ENCODE measurements at regions of chr6 and their contacts with region 1.

Region 1: GRCh38 chr6:35240840-35241801 is 18.4 kb upstream of the ZNF76 start:
- DNase-seq: peak; percentile 49 to 78 (median 54)
- H3K4me3 ChIP-seq: no peak overlapping the region
- H3K4me3 Mint-ChIP-seq: no peak overlapping the region
- H3K27ac ChIP-seq: no peak overlapping the region
- H3K27ac Mint-ChIP-seq: peak overlapping the region in 2 of 8 donors; percentile 78 to 90
- H3K4me1 ChIP-seq: no peaks in the 10 kb centered on the region
- H3K4me1 Mint-ChIP-seq: peaks cover 3 to 5% (median 3%) of the 10 kb centered on the region in 3 donors
- H3K27me3 ChIP-seq: no peaks in the 10 kb centered on the region
- H3K27me3 Mint-ChIP-seq: peaks cover 0 to 2% of the 10 kb centered on the region in 2 donors

Region 2: DNA sequence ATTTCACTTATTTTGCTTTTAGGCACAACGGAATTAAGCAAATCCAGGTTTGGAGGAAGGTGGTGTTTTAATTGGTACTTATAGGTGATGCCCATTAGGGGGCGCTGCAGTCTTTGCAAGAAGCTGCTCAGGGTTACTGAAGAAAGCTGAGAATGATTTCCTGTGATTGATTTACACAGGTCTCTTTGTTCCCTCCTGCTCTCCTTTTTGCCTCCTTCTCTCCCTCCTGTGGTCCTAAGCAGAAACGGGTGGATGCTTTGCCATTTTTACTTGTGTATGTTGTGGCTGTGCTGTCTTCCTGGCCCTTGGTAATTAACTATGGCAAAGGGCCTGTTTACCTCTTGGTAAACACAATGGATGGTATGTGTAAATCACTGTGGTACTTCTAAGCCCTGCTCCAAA is 254.3 kb before region 1 on chr6:
- CTCF ChIA-PET with region 1: interaction called, 14 read pairs
- POLR2A ChIA-PET with region 1: no interaction called
- DNase-seq: peak; percentile 37 to 62 (median 49)
- H3K4me3 ChIP-seq: no peak overlapping the region
- H3K4me3 Mint-ChIP-seq: no peak overlapping the region
- H3K27ac ChIP-seq: no peak overlapping the region
- H3K27ac Mint-ChIP-seq: peak overlapping the region in 1 of 8 donors; percentile 35
- H3K4me1 ChIP-seq: no peaks in the 10 kb centered on the region
- H3K4me1 Mint-ChIP-seq: no peaks in the 10 kb centered on the region
- H3K27me3 ChIP-seq: no peaks in the 10 kb centered on the region
- H3K27me3 Mint-ChIP-seq: no peaks in the 10 kb centered on the region

Region 3: DNA sequence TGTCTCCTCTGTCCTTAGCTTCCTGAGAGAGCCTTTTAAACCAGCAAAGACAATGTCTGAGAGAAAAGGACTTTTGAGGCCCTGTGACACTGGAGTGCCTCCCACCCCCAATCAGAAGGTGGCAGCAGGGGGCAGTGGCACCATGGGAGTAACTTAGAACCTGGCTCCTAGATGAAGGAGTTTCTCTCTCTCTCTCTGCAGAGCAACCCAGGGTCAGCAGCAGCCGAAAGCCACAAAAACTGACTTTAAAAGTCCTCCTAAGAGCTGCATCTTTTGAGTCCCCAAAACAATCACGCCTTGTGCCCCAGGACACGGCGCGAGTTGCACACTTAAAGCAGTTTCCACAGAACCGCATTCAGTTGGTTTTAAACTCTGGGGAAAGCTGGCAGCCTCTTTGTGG is 94.7 kb before region 1 on chr6:
- CTCF ChIA-PET with region 1: interaction called, 19 read pairs
- POLR2A ChIA-PET with region 1: no interaction called
- DNase-seq: peak in 2 of 5 donors; percentile 10 to 54
- H3K4me3 ChIP-seq: no peak overlapping the region
- H3K4me3 Mint-ChIP-seq: no peak overlapping the region
- H3K27ac ChIP-seq: no peak overlapping the region
- H3K27ac Mint-ChIP-seq: no peak overlapping the region
- H3K4me1 ChIP-seq: no peaks in the 10 kb centered on the region
- H3K4me1 Mint-ChIP-seq: peaks cover 0 to 3% (median 2%) of the 10 kb centered on the region in 3 donors
- H3K27me3 ChIP-seq: no peaks in the 10 kb centered on the region
- H3K27me3 Mint-ChIP-seq: peaks cover 7 to 18% of the 10 kb centered on the region in 2 donors

Region 4: GRCh38 chr6:35206346-35206745 is 34.8 kb before region 1 on chr6:
- CTCF ChIA-PET with region 1: interaction called, 26 read pairs
- POLR2A ChIA-PET with region 1: no interaction called
- DNase-seq: no peak
- H3K4me3 ChIP-seq: no peak overlapping the region
- H3K4me3 Mint-ChIP-seq: no peak overlapping the region
- H3K27ac ChIP-seq: no peak overlapping the region
- H3K27ac Mint-ChIP-seq: peak overlapping the region in 1 of 8 donors; percentile 7
- H3K4me1 ChIP-seq: no peaks in the 10 kb centered on the region
- H3K4me1 Mint-ChIP-seq: no peaks in the 10 kb centered on the region
- H3K27me3 ChIP-seq: peaks cover 9% of the 10 kb centered on the region
- H3K27me3 Mint-ChIP-seq: peaks cover 31 to 80% of the 10 kb centered on the region in 2 donors

Region 5: DNA sequence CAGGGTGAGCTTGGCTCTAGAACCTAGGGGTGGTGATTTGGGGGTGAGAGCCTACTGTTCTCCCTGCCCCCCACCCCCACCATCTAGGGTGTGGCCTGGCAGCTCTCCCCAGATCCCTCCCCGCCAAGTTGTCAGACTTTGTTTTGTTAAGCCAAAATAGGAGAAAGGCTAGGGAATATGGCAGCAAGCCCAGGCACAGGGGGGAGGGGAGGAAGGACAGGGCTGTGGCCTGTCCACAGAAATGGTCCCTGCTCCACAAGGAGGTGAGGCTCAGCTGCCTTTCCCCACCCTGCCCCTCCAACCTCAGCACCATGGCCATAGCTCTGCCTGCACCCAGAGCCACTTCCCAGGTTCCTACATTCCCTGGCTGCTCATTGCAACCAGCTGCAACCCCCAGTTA is 10.2 kb before region 1 on chr6:
- CTCF ChIA-PET with region 1: interaction called, 26 read pairs
- POLR2A ChIA-PET with region 1: no interaction called
- DNase-seq: no peak
- H3K4me3 ChIP-seq: no peak overlapping the region
- H3K4me3 Mint-ChIP-seq: no peak overlapping the region
- H3K27ac ChIP-seq: no peak overlapping the region
- H3K27ac Mint-ChIP-seq: no peak overlapping the region
- H3K4me1 ChIP-seq: no peaks in the 10 kb centered on the region
- H3K4me1 Mint-ChIP-seq: peaks cover 0 to 1% (median 0%) of the 10 kb centered on the region in 3 donors
- H3K27me3 ChIP-seq: no peaks in the 10 kb centered on the region
- H3K27me3 Mint-ChIP-seq: peaks cover 0 to 2% of the 10 kb centered on the region in 2 donors

Region 6: DNA sequence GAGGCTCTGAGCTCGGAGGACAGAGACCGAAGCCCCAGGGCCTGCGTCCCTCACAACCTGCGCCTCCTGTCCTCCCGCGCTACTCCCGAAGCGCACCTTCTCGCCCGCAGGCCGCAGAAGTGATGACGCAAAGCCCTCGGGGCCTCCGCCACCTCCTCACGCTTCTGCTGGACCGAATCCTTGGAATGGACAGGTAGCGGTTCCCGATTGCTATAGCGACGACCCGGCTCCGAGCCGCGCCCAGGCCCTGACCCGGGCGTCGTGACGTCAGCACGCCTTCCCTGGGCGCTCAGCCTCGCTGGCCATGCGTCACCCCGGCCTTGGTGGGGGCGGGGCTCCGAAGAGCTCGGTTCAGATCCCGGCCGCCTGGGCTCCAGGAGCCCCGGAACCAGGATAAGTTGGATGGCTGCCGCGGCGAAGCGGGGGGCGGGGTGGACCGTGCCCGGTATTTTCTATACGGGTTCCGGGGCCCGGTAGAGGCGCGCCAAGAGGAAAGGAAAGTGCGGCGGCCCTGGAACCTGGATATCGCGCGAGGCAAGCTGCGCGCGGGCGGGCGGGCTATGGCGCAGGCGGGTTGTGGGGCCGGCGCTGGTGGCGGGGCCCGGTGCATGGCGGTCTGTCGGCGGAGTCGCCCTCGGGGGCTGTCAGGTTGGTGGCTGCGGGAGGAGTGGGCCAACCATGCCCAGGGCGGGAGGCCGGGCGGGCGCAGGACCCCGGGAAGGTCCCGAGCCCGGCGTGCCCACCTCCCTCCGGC is 18.2 kb after region 1 on chr6 and contains the start of gene ZNF76:
- CTCF ChIA-PET with region 1: interaction called, 13 read pairs
- POLR2A ChIA-PET with region 1: no interaction called
- DNase-seq: peak; percentile 92 to 94 (median 93)
- H3K4me3 ChIP-seq: peak within 1 kb of the TSS; percentile 97
- H3K4me3 Mint-ChIP-seq: peak within 1 kb of the TSS; percentile 89 to 99 (median 96)
- H3K27ac ChIP-seq: peak within 1 kb of the TSS; percentile 94
- H3K27ac Mint-ChIP-seq: peak within 1 kb of the TSS; percentile 93 to 99 (median 99)
- H3K4me1 ChIP-seq: peaks cover 44% of the 10 kb centered on the region
- H3K4me1 Mint-ChIP-seq: peaks cover 49 to 62% (median 61%) of the 10 kb centered on the region in 3 donors
- H3K27me3 ChIP-seq: no peaks in the 10 kb centered on the region
- H3K27me3 Mint-ChIP-seq: peaks cover 0 to 3% of the 10 kb centered on the region in 2 donors
- total RNA-seq, gene ZNF76: 31.3 to 35.2 TPM

Region 7: DNA sequence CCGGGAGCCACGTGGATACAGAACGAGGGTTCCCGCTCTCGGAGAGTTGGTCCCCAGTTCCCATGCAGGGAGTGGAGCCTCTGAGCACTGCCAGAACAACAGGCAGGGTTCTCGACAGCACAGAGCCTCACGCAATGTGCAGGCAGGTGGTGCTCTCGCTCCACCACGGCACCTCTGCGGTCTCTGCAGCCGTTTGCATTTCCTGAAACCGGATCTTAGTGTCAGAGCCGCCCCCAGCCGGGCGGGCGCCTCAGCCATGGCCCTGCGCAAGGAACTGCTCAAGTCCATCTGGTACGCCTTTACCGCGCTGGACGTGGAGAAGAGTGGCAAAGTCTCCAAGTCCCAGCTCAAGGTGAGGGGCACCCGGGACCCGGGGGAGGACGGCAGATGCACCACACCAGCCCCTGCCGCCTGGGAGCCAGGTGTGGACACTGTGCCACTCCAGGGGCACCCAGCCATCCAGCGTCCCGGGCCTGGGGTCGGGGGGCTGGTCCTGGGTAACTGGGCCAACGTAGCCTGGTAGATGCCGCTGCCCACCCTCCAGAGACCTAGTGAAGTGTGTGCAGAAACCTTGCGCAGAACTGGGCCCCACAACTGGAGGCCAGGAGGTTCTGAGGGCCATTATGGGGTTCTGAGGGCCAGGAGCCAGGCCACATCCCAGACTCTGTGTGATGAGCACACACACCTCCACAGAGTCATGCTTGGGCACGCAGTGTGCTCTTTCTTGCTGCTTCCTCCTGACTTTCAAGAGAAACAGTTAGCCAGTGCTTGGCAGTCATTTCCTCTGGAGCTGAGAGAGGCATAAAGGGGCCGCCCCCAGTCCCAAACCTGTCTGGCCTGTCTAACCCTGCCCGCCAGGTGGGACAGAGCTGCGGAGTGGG is 56.7 kb after region 1 on chr6 and contains the start of gene DEF6:
- CTCF ChIA-PET with region 1: no interaction called
- POLR2A ChIA-PET with region 1: no interaction called
- DNase-seq: peak; percentile 82 to 92 (median 84)
- H3K4me3 ChIP-seq: peak within 1 kb of the TSS; percentile 93
- H3K4me3 Mint-ChIP-seq: peak within 1 kb of the TSS; percentile 81 to 93 (median 86)
- H3K27ac ChIP-seq: peak within 1 kb of the TSS; percentile 86
- H3K27ac Mint-ChIP-seq: peak within 1 kb of the TSS; percentile 90 to 100 (median 98)
- H3K4me1 ChIP-seq: peaks cover 48% of the 10 kb centered on the region
- H3K4me1 Mint-ChIP-seq: peaks cover 44 to 55% (median 52%) of the 10 kb centered on the region in 3 donors
- H3K27me3 ChIP-seq: no peaks in the 10 kb centered on the region
- H3K27me3 Mint-ChIP-seq: no peaks in the 10 kb centered on the region
- total RNA-seq, gene DEF6: 71.2 to 73.0 TPM